Activated B cell treated with CpG ODN at 0.5 μM for 24 hours (primary cell): ENCODE measurements at regions of chr2 and their contacts with region 1.

Region 1: DNA sequence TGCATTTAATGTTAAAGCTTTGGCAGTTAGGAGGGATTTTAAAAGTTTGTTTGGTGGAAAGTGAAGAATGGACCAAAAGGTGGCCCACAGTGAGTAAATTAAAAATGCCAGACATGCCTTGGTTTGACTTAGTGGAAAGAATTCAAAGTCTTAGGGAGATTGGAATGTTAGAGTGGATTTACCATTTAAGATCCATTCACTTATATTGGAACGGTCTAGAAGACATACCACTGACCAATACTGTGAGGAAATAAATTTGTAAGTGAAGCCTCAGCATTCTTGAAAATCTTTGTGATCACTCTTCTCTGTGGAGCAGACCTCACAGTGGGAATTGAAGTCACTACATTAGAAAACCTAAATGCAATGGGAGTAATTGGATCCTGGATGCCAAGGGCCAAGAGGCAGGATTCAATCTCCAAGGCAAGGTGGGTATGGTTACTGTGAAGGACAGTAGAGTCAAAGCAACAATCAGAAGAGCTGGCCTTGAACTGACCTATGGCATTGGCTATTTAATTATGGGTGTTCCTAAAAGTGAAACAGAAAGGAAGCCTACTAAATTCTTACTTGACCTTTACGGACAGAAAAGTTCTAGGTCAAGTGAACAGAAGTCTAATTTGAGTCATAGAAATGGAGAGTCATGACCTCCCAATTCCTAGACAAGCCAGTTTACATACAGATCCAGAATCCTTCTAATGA is 40.2 kb upstream of the VRK2 start:
- DNase-seq: no peak
- ATAC-seq: no peak
- H3K4me3 Mint-ChIP-seq: no peak overlapping the region
- H3K27ac Mint-ChIP-seq: no peak overlapping the region
- H3K4me1 Mint-ChIP-seq: peaks cover 9% of the 10 kb centered on the region
- H3K27me3 Mint-ChIP-seq: no peaks in the 10 kb centered on the region
- CTCF ChIP-seq: no peak

Region 2: GRCh38 chr2:57962861-57963260 is 43.5 kb before region 1 on chr2:
- CTCF ChIA-PET with region 1: no interaction called
- POLR2A ChIA-PET with region 1: no interaction called
- intact Hi-C with region 1: loop called (anchors 5 kb)
- DNase-seq: no peak
- ATAC-seq: peak; percentile 42
- H3K4me3 Mint-ChIP-seq: no peak overlapping the region
- H3K27ac Mint-ChIP-seq: no peak overlapping the region
- H3K4me1 Mint-ChIP-seq: peaks cover 8% of the 10 kb centered on the region
- H3K27me3 Mint-ChIP-seq: no peaks in the 10 kb centered on the region
- CTCF ChIP-seq: no peak